Activated T-helper 1 cell treated with anti-CD3 and anti-CD28 coated beads, Interleukin-12 subunit alpha, Interleukin-12 subunit beta, Interleukin-2, Interleukin-4 antibody, amounts not matched to agents 30 ng/mL and 10 ng/mL and 1 ng/mL, durations not matched to agents 14 hours and 24 hours and 36 hours (primary cell): ENCODE measurements at regions of chr6 and their contacts with region 1.

Region 1: GRCh38 chr6:33744001-33744848 is 2.5 kb downstream of the IP6K3 start:
- DNase-seq: peak; percentile 57
- H3K4me3 Mint-ChIP-seq: no peak overlapping the region
- H3K27ac Mint-ChIP-seq: no peak overlapping the region
- H3K4me1 Mint-ChIP-seq: no peaks in the 10 kb centered on the region
- H3K27me3 Mint-ChIP-seq: peaks cover 22% of the 10 kb centered on the region

Region 2: DNA sequence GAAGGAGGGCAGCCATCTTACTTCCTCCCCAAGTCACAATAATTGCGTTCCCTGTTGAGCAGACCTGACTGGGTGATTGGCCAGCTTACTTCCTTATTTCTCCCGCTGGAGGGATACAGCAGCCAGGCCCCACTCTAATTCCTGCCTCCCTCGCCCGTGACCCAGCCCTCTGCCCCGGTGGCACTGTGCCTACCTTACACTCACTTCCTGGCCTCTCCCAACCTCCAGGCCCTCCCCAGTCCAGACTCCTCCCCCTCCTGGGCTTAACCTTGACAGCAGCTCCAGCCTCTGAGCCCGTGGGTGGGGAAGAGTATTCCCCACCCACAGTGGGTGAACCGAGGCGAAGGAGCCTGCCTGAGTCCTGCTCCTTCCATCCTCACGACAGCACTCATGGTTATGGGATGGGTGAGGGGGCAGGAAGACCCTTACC is 167.1 kb before region 1 on chr6:
- intact Hi-C with region 1: no loop called
- DNase-seq: no peak
- H3K4me3 Mint-ChIP-seq: peak overlapping the region; percentile 90
- H3K27ac Mint-ChIP-seq: peak overlapping the region; percentile 65
- H3K4me1 Mint-ChIP-seq: peaks cover 39% of the 10 kb centered on the region
- H3K27me3 Mint-ChIP-seq: no peaks in the 10 kb centered on the region

Region 3: GRCh38 chr6:33642897-33643296 is 101.3 kb before region 1 on chr6:
- intact Hi-C with region 1: no loop called
- DNase-seq: no peak
- H3K4me3 Mint-ChIP-seq: no peak overlapping the region
- H3K27ac Mint-ChIP-seq: no peak overlapping the region
- H3K4me1 Mint-ChIP-seq: peaks cover 22% of the 10 kb centered on the region
- H3K27me3 Mint-ChIP-seq: no peaks in the 10 kb centered on the region

Region 4: DNA sequence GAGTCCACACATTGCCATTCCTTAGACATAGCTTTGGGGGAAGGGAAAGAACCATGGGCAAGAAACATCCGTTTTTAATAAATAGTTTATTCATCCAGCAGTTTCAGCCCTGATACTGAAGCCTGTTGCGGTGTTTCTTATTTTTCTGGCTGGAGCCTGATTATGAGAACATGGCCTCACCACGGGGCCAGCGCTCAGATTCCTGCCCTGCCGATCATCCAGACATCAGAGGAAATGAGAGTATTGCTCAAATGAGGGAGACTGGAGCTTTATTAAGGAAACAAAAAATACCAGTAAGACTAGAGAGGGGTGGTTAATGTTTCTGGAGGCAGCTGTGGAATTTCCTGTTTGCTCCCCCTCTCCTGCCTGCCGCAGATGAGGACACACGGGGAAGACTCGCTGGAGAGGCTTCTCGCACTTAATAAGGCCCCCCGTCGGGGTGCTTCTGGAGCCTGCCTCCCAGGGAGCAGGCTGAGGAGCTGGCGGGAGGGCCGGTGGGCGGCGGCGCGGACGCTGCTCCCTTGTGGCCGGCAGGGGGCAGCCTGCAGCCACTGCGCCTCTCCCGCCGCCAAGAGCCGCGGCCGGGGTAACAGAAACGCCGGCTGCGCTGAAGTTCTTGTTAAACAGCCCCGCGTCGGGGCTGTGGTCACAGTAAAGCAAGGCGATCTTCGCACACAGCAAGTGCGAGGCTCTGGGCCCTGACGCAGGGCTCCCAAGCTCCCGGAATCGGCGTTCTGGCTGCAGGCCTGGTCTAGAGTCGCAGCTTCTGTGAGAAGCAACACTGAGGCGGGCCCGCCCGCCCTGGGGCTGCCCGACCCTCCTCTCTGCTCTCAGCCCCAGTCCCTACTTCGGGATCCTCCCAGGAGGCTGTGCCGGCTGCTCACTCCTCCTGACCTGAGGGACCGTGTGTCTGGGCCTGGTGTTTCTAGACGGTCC is 27.2 kb after region 1 on chr6:
- intact Hi-C with region 1: loop called (anchors 2 kb)
- DNase-seq: peak; percentile 38
- H3K4me3 Mint-ChIP-seq: no peak overlapping the region
- H3K27ac Mint-ChIP-seq: peak overlapping the region; percentile 13
- H3K4me1 Mint-ChIP-seq: no peaks in the 10 kb centered on the region
- H3K27me3 Mint-ChIP-seq: peaks cover 7% of the 10 kb centered on the region